ENCODE measurements at regions of chr16 and their contacts with region 1.

Region 1: DNA sequence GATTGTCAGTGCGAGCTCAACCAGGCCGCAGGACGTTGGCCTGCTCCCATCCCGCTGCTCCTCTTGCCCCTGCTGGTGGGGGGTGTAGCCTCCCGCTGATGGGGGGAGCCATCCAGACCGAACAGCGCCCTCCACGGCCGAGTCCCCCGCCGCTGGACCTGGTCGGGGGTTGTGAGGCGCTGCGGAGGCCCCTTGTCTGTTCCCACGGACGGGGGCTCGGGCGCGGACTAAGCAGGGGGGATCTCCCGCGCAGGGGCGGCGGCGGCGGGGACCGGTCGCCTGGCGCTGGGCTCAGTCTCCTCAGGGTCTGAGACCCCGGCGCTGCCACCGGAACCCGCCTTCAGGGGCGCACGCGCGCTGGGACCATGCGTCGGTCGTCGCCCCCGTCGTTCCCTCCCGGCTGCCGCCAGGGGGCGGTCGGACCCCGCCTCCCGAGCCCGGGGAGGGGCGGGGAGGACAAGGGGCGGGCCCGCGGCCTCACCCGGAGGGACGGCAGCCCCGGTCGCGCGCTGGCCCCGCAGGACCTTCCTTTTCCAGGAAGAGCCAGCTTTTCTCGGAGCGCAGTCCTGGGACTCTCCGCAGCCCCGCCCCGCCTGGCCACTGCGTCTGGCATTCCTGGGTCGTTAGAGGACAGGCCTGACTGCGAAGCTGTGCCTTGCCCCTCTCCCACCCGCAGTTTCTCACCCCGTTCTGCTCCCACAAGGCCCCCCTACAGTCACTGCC is 6.3 kb upstream of the IL32 start:
- DNase-seq: peak; percentile 95 to 96
- ATAC-seq: peak; percentile 97
- H3K4me3 ChIP-seq: peak overlapping the region; percentile 43 to 48
- H3K27ac ChIP-seq: peak overlapping the region in 1 of 2 donors; percentile 3
- H3K4me1 ChIP-seq: no peaks in the 10 kb centered on the region
- H3K27me3 ChIP-seq: no peaks in the 10 kb centered on the region

Region 2: GRCh38 chr16:3106205-3106928 is 47.2 kb after region 1 on chr16:
- intact Hi-C with region 1: loop called in 1 of 2 experiments (anchors 5 kb)
- DNase-seq: peak; percentile 94 to 96
- ATAC-seq: peak; percentile 94
- H3K4me3 ChIP-seq: peak overlapping the region in 1 of 2 donors; percentile 62
- H3K27ac ChIP-seq: peak overlapping the region in 1 of 2 donors; percentile 28
- H3K4me1 ChIP-seq: no peaks in the 10 kb centered on the region
- H3K27me3 ChIP-seq: no peaks in the 10 kb centered on the region

Region 3: GRCh38 chr16:3123986-3124886 is 65.1 kb after region 1 on chr16:
- intact Hi-C with region 1: loop called (anchors 1 to 5 kb)
- DNase-seq: peak; percentile 98
- ATAC-seq: peak; percentile 97
- H3K4me3 ChIP-seq: peak overlapping the region; percentile 2 to 51
- H3K27ac ChIP-seq: peak overlapping the region in 1 of 2 donors; percentile 9
- H3K4me1 ChIP-seq: no peaks in the 10 kb centered on the region
- H3K27me3 ChIP-seq: no peaks in the 10 kb centered on the region

Region 4: DNA sequence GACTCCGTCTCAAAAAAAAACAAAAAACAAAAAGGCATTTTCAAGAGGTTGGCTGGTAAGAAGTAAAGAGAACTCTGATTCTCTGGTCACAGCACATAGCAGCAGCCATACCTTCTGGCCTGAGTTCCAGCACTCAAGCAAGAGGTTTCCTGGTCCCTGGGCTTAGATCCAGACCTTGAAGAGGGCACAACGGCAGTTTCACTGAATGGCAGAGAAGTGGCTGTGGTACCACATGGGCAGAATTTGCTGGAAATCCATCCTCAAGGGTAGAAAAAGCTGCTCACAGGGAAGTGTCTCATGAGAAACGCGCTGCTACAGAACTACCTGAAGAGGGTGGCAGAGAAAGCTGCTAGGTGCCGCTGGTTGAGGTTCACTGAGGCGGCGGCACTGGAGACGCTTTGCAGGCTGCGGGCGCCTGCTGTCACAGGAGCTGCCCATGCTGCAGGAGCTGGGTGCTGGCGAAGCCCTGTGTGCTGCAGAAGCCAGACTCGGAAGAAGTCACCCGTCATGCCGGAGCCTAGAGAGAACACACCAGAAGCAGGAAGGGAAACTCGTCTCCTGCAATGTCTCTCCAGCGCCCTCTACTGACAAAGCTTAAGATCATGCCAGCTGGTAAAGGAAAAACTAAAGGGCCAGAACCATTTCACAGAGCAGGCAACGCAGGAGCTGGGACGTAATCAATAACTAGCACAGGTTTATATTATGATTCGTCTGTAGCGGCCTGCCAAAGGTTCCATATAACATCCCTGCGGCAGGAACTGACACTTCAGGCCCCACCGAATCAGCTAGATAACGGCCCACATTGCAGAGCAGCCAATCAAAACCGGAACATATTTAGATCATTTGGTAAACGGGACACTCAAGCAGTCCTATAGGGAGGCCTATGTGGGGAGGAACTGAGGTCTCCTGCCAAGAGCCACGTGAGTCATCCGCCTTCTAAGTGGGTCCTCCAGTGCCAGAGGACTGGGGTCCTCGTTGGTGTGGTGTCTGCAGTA is 70.3 kb after region 1 on chr16:
- intact Hi-C with region 1: loop called (anchors 1 to 5 kb)
- DNase-seq: peak; percentile 81 to 84
- ATAC-seq: peak; percentile 87
- H3K4me3 ChIP-seq: peak overlapping the region in 1 of 2 donors; percentile 9
- H3K27ac ChIP-seq: peak overlapping the region in 1 of 2 donors; percentile 83
- H3K4me1 ChIP-seq: no peaks in the 10 kb centered on the region
- H3K27me3 ChIP-seq: no peaks in the 10 kb centered on the region

Region 5: DNA sequence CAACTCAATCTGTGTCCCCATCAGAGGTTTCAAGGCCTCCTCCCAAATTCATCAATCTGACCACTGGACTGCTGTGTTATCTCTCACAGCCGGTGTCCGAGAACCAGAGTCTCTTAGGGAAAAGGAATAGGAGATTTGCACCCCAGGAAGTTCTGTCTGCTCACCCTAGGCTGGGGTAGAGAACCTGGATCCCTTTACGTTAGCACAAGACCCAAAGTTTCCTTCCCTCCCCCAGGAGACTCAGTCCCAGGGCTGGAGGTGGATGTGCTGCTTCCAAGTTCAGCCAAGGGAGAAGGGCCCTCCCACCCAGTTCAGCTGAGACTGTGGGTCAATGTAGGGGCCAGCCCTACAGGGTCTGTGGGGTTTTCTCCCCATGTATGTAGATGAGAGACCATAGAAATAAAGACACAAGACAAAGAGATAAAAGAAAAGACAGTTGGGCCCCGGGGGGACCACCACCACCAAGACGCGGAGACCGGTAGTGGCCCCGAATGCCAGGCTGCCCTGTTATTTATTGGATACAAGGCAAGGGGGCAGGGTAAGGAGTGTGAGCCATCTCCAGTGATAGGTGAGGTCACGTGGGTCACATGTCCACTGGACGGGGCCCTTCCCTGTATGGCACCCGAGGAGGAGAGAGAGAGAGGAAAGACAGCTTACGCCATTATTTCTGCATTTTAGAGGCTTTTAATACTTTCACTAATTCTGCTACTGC is 106.1 kb after region 1 on chr16:
- intact Hi-C with region 1: loop called (anchors 5 kb)
- DNase-seq: peak in 1 of 2 donors; percentile 43
- ATAC-seq: no peak
- H3K4me3 ChIP-seq: no peak overlapping the region
- H3K27ac ChIP-seq: no peak overlapping the region
- H3K4me1 ChIP-seq: no peaks in the 10 kb centered on the region
- H3K27me3 ChIP-seq: peaks cover 0 to 1% of the 10 kb centered on the region in 2 donors

Measured in aorta (tissue), 5 donors.